GM12878 (cell line): ENCODE measurements at regions of chr7 and their contacts with region 1.

Region 1: GRCh38 chr7:55593515-55594318 is 21.4 kb upstream of the VOPP1 start:
- DNase-seq: no peak
- ATAC-seq: peak; percentile 84
- H3K4me3 ChIP-seq: no peak overlapping the region
- H3K27ac ChIP-seq: no peak overlapping the region
- H3K4me1 ChIP-seq: peaks cover 9% of the 10 kb centered on the region; the same call in 1 of the 2 replicates
- H3K27me3 ChIP-seq: no peaks in the 10 kb centered on the region
- CTCF ChIP-seq: peak; percentile 73 to 94 (median 90)
- EP300 ChIP-seq: no peak
- POLR2A ChIP-seq: no peak
- RAD21 ChIP-seq: peak; percentile 54

Region 2: DNA sequence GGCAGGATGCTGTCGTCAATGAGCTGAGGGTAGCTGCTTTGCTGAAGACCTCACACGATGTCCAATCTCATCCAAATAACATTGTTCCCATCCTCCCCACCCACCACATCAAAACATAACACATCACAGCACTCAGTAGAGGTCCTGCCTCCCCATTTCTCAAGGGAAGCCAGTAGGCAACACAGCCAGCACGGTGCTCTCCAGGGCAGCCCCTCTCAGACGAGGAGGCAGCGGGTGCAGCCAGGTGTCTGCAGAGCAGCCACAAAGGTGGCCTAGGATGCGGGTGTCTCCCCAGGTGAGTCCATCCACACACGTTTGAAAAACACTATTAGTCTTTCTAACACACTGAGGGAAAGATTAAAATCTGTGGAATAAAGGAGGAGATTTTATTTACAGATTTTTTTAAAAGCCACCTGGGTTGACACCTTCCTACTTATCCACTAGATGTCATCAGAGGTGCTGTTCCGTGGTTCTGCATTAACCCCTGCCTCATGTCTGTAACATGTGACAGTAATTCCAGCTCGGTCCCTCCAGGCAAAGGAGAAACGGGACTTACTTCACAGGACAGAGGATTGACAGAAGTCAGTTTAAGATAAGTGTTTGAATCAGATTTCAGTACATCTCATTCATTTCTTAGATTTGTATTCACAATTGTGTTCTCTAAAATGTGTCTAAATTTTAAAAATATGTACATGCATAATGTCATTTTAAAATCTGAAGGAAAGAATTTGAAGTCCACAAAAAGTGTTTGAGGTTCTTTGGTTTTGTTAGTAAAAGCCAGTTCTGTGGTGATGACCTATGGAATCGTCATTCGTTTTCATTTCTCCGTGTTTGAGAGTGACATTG is 160.6 kb before region 1 on chr7:
- CTCF ChIA-PET with region 1: interaction called, 14 read pairs
- POLR2A ChIA-PET with region 1: no interaction called
- RAD21 ChIA-PET with region 1: interaction called, 5 read pairs
- SMC1A ChIA-PET with region 1: interaction called, 16 read pairs
- in situ Hi-C with region 1: loop called (anchors 5 kb)
- intact Hi-C with region 1: loop called (anchors 5 kb)
- DNase-seq: no peak
- ATAC-seq: peak; percentile 85
- H3K4me3 ChIP-seq: no peak overlapping the region
- H3K27ac ChIP-seq: no peak overlapping the region
- H3K4me1 ChIP-seq: no peaks in the 10 kb centered on the region
- H3K27me3 ChIP-seq: no peaks in the 10 kb centered on the region
- CTCF ChIP-seq: peak; percentile 58 to 74 (median 61); a peak in 5 of 6 replicates
- EP300 ChIP-seq: no peak
- POLR2A ChIP-seq: no peak
- RAD21 ChIP-seq: peak; percentile 71

Region 3: DNA sequence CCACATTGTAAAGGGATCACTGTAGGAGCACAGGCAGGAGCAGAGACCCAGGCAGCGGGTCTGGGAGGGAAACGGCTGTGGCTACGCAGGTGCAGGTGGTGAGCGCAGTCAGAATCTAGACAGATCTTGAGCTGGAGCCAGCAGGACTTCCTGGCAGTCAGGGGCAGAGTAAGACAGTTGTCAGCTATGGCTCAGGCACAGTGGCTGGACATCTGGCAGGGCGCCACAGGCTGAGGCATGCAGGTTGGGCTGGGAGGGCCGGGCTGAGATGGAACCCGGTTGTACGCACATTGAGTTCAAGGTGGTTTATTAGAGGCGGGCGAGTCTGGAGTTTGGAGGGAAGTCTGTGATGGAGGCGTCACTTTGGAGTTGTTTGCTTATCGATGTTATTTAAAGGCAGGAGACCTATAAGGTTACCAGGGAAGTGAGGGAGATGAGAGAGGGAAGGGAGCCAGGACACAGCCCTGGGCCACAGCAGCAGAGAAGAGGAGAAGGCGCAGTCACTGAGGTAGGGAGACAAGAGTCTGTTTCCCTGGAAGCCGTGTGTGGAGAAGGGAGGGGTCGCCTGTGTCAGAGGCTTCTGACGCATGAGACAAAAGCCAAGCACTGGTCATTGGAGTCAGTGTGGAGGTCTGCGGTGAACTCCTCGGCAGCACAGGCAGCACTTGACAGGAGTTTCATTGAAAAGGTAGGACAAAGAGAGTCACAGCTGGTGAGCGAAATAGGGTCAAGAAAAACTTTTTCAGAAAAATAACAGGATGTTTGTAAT is 154.8 kb before region 1 on chr7:
- CTCF ChIA-PET with region 1: interaction called, 14 read pairs
- POLR2A ChIA-PET with region 1: no interaction called
- RAD21 ChIA-PET with region 1: interaction called, 5 read pairs
- SMC1A ChIA-PET with region 1: interaction called, 16 read pairs
- in situ Hi-C with region 1: loop called (anchors 5 kb)
- intact Hi-C with region 1: loop called (anchors 5 kb)
- DNase-seq: no peak
- ATAC-seq: no peak
- H3K4me3 ChIP-seq: no peak overlapping the region
- H3K27ac ChIP-seq: no peak overlapping the region
- H3K4me1 ChIP-seq: no peaks in the 10 kb centered on the region
- H3K27me3 ChIP-seq: no peaks in the 10 kb centered on the region
- CTCF ChIP-seq: no peak
- EP300 ChIP-seq: no peak
- POLR2A ChIP-seq: no peak
- RAD21 ChIP-seq: no peak

Region 4: DNA sequence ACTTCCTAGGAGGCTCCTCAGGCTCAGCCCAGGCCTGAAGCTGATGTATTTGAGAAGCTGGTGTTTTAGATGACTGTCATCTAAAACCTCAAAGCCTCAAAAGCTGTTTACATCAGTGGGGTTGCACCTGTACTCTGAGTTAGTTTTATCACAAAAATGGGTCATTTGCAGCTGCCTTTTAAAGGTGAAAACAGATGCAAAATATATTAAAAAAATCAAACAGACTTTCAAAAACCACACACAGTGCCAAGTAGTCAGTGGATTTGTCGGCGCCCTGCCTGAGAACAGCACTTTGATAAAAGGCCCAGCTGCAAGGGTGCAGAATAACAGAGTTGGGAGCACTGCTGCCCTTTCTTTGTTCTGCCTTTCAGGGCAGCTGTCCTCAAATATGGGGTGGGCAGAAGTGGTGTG is 124.4 kb before region 1 on chr7:
- CTCF ChIA-PET with region 1: no interaction called
- POLR2A ChIA-PET with region 1: no interaction called
- RAD21 ChIA-PET with region 1: no interaction called
- SMC1A ChIA-PET with region 1: no interaction called
- in situ Hi-C with region 1: no loop called
- intact Hi-C with region 1: no loop called
- DNase-seq: no peak
- ATAC-seq: no peak
- H3K4me3 ChIP-seq: no peak overlapping the region
- H3K27ac ChIP-seq: no peak overlapping the region
- H3K4me1 ChIP-seq: no peaks in the 10 kb centered on the region
- H3K27me3 ChIP-seq: no peaks in the 10 kb centered on the region
- CTCF ChIP-seq: no peak
- EP300 ChIP-seq: no peak
- POLR2A ChIP-seq: no peak
- RAD21 ChIP-seq: no peak

Region 5: GRCh38 chr7:55939514-55940123 is 345.9 kb after region 1 on chr7:
- CTCF ChIA-PET with region 1: no interaction called
- POLR2A ChIA-PET with region 1: no interaction called
- RAD21 ChIA-PET with region 1: no interaction called
- SMC1A ChIA-PET with region 1: no interaction called
- in situ Hi-C with region 1: no loop called
- intact Hi-C with region 1: no loop called
- DNase-seq: no peak
- ATAC-seq: no peak
- H3K4me3 ChIP-seq: no peak overlapping the region
- H3K27ac ChIP-seq: no peak overlapping the region
- H3K4me1 ChIP-seq: no peaks in the 10 kb centered on the region
- H3K27me3 ChIP-seq: no peaks in the 10 kb centered on the region
- CTCF ChIP-seq: no peak
- EP300 ChIP-seq: no peak
- POLR2A ChIP-seq: no peak
- RAD21 ChIP-seq: no peak